Activated CD4-positive, alpha-beta T cell treated with anti-CD3 and anti-CD28 coated beads for 36 hours (primary cell): ENCODE measurements at regions of chr5 and their contacts with region 1.

Region 1: DNA sequence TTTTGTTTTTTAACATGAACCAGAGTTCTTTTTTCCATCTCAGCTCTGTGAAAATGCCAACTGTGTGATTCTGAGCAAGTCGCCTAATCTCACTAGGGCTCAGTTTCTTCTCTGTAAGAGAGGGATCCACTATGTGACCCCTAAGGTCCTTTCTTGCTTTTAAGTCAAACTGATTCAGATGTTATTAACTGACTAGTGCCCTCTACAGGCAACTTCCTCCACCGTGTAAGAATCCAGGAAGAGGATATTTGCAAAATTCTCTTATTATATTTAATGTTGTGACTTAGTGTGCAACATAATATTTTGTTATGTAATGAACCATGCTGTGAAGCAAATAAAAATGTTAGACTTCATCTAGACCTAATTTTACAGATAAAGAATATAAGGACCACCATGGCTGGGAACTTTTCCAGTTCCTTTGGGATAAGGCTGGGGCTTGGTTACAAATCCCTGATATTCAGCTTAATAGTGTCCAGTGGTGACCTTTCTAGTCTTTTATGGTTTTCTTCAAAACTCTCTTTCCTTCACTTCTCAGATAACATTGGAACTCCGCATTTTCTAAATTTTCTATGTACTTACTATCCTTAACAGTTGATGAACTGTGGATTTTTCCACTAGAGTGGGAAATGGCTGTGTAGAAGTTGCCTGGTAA is 244.7 kb downstream of the PIK3R1 start:
- DNase-seq: peak; percentile 53
- ATAC-seq: no peak
- H3K4me3 Mint-ChIP-seq: no peak overlapping the region
- H3K27ac Mint-ChIP-seq: no peak overlapping the region
- H3K4me1 Mint-ChIP-seq: peaks cover 18% of the 10 kb centered on the region
- H3K27me3 Mint-ChIP-seq: no peaks in the 10 kb centered on the region

Region 2: DNA sequence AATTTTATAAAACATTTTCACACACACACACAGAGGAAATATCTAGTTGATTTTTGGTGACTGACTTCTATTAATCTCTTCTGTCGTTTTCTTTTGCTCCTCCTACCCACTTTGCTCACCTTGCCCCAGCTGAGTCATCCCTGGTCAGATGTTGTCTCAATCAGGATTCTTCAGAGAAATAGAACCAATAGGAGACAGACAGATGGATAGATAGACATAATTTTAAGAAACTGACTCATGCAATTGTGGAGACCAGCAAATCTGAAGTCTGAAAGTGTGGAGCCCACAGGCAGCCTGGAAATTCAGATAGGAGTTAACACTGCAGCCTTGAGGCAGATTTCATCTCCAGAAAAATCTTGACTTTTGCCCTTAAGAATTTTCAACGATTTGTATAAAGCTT is 281.7 kb before region 1 on chr5:
- CTCF ChIA-PET with region 1: no interaction called
- POLR2A ChIA-PET with region 1: no interaction called
- intact Hi-C with region 1: no loop called
- DNase-seq: peak; percentile 29
- ATAC-seq: peak; percentile 80
- H3K4me3 Mint-ChIP-seq: no peak overlapping the region
- H3K27ac Mint-ChIP-seq: no peak overlapping the region
- H3K4me1 Mint-ChIP-seq: peaks cover 2% of the 10 kb centered on the region
- H3K27me3 Mint-ChIP-seq: no peaks in the 10 kb centered on the region

Region 3: GRCh38 chr5:68303038-68303738 is 157.1 kb before region 1 on chr5:
- CTCF ChIA-PET with region 1: interaction called, 3 read pairs
- POLR2A ChIA-PET with region 1: no interaction called
- intact Hi-C with region 1: loop called in 1 of 2 experiments (anchors 2 kb)
- DNase-seq: no peak
- ATAC-seq: peak; percentile 62
- H3K4me3 Mint-ChIP-seq: no peak overlapping the region
- H3K27ac Mint-ChIP-seq: peak overlapping the region; percentile 11
- H3K4me1 Mint-ChIP-seq: peaks cover 49% of the 10 kb centered on the region
- H3K27me3 Mint-ChIP-seq: no peaks in the 10 kb centered on the region

Region 4: DNA sequence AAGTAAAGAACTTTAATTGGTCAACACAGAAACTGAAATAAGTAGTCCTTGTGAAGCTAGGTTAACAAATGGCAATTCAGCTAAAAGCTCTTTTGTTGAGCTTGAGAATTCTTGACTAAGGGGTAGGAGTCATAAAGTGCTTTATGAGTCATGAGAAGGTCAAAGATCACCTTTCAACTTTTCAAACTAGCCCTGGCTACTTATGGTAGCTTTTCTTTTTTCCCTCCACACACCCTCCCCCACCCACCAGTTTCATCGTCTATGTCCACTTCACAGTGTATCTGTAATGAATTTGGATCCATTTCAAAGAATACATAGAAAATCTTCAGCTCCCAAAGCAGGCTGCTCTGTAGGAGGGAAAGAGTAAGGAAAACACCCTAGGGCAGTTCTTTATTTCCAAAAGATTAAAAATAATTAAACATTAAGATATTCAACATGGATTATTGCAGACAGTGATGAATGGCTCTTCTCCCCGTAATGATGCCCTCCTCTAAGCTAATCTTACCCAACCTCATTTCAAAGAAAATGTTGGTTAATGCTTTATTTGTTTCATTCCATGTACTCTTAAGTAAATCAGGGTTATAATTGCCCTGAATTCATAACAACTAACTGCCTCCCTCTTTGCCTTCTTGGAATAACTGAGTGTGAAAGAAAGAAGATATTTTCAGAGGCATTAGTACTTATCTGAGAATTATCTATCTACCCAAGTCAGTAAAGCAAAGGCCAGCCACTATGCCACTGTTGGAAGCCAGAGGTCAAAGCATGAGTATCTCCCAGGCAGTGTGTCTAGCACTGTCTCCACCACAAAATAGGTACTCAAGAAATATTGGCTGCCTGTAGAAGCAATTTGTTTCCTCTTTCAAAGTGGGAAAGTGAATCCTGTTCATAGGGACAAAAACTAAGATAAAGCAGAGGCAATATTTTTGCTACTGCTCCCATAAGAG is 45.9 kb after region 1 on chr5:
- CTCF ChIA-PET with region 1: no interaction called
- POLR2A ChIA-PET with region 1: no interaction called
- intact Hi-C with region 1: loop called in 1 of 2 experiments (anchors 2 kb)
- DNase-seq: no peak
- ATAC-seq: no peak
- H3K4me3 Mint-ChIP-seq: no peak overlapping the region
- H3K27ac Mint-ChIP-seq: no peak overlapping the region
- H3K4me1 Mint-ChIP-seq: no peaks in the 10 kb centered on the region
- H3K27me3 Mint-ChIP-seq: no peaks in the 10 kb centered on the region